GM13977 (cell line): ENCODE measurements at regions of chr11 and their contacts with region 1.

Region 1: DNA sequence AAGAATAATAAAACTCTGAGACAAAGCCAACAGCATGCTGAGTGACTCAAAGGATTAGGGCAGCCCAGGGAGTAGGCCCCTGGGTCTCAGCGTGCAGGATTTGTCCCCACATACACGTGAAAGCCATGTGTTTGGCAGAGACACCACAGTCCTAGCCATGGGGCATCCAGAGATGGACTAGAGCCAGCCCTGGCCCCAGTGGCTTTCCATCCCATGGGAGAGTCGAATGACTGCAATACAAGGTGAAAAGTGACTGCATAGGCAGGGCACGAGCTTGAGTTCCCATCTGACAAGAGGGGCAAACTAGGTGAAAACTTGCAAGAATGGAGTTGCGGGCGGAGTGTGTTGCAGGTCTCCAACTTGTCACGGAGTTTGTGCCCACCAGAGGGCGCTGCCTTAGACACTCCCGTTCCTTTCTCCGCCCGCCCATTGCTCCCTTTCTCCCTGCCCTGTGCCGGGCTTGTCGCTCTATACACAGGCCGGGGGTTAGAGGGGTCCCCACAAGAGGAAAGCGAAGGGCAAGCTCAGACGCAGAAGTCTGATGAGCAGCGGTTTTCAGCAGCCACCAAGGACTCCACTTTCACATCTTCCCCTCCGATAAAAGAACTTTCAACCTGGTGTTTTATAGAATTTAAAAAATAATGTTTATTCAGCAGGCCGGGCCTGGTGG is 24.2 kb downstream of the TSKU start:
- DNase-seq: peak; percentile 77
- CTCF ChIP-seq: peak; percentile 81

Region 2: GRCh38 chr11:76166314-76166713 is 641.0 kb before region 1 on chr11:
- in situ Hi-C with region 1: no loop called
- DNase-seq: peak; percentile 65
- CTCF ChIP-seq: no peak

Region 3: DNA sequence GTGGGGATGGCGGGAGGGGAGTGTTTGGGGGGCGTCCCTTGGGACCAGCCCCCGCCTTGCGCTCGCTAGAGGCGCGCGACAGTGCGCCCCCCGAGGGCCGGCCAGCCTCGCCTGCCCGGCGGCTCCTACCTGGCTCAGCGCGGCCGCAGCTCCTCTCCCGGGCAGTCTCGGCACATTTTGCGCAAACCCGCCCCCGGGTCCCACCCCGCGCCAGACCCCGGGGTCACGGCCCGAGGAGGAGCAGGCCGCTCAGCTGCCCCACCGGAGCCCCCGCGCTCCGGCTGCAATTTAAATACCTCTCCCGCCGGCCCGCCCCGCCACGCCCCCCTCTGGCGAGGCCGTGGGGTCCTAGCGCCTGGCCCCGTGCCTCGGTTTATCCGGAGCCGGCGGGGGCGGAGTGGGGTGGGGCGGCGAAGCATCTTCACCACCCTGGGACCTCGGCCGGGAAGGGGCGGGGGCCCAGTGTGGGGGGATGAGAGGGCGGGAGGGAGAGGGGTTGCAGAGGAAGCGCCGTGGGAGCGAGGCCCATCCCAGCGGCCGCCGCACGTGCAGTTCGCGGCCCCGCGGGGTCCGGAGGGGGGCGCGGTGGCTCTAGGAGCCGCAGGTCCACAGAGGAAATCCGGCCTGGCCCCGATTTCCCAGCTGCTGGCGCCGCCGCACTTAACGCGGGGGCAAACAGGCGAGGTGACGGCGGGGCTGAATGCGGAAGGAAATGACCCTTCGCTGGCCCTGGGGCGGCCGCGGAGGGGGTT is 136.7 kb before region 1 on chr11 and contains the start of gene LRRC32:
- in situ Hi-C with region 1: no loop called
- DNase-seq: no peak
- CTCF ChIP-seq: peak; percentile 14

Region 4: GRCh38 chr11:76919887-76920746 is 112.8 kb after region 1 on chr11:
- in situ Hi-C with region 1: loop called (anchors 10 kb)
- DNase-seq: peak; percentile 50
- CTCF ChIP-seq: peak; percentile 75

Region 5: DNA sequence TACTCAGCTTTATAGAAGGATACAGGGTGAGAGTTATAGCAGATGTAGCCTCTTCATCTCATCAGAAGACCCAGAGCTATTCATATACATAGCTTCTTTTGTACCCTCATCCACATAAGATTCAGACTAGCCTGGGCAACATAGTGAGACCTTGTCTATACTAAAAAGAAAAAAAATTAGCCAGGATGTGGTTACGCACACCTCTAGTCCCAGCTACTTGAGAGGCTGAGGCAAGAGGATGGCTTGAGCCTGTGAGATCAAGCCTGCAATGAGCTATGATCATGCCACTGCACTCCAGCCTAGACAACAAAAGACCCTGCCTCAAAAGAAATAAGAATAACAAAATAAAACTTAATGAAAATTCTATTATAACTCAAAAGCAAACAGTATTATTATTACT is 190.2 kb after region 1 on chr11:
- in situ Hi-C with region 1: no loop called
- DNase-seq: no peak
- CTCF ChIP-seq: no peak

Region 6: DNA sequence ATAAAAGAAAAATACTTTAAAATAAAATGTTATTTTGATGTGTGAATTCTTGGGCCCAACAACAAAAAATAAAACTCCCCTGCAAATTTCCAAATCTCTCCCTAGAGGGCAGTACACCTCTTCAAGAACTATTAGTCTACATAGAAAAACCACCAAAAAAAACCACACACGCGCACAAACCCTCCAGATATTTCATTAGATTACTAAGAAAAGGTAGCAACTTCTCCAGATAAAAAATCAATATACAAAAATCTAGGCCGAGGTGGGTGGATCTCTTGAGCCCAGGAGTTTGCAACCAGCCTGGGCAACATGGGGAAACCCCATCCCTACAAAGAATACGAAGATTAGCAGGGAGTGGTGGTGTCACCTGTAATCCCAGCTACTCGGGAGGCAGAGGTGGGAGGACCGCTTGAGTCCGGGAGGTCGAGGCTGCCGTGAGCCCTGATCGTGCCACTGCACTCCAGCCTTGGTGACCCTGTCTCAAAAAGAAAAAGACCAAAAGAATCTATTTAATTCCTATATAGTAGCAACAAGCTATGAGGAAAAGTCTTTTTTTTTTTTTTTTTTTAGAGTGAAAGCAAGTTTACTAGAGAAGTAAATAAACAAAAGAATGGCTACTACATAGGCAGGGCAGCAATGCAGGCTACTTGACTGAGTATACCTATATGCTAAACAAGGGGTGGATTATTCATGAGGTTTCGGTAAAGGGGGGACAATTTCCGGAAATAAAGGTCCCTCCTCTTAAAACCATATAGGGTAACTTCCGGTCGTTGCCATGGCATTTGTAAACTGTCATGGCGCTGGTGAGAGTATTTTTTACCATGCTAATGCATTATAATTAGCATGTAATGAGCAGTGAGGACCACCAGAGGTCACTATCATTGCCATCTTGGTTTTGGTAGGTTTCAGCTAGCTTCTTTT is 239.9 kb after region 1 on chr11:
- in situ Hi-C with region 1: loop called (anchors 25 kb)
- DNase-seq: peak; percentile 86
- CTCF ChIP-seq: peak; percentile 61